ENCODE measurements at regions of chr11 and their contacts with region 1.

Region 1: DNA sequence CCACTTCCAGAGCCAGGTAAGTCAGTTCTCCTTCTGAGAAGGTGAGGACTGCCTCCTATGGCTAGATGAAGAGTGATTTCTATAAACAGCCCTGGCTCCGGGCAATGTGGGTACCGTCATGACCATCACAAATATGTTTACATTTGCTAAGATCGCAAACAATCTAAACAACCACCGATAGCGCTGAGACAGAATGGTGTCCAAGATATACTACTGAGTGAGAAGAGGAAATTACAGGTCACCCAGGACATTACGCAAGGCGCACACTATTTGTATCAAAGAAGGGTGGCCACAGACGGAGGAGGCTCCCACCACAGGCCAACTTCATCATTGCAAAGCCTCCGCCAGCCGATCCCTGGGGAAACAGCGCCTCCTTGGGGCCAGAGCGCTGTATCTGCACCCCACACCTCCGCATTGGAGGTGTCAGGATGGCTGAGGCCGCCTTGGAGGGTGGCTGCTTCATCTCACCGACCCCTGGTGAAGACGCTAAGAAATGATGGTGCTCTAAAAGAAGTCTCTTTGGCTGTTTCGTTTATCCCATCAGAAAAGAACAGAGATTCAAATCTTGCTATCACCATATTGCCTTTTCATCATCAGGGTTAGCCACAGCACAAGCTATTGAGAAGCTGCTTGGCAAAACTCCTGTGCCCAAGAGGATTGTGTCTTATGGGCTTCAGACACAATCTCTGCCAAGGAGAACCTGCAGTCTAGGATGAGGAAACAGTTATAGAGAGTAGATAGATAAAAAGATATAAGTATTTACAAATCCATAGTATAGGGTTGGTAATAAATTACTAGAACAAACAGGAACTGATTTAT is 12.3 kb upstream of the ASRGL1 start:
- DNase-seq: peak; percentile 85
- H3K4me3 Mint-ChIP-seq: no peak overlapping the region
- H3K27ac Mint-ChIP-seq: no peak overlapping the region
- H3K4me1 Mint-ChIP-seq: peaks cover 3% of the 10 kb centered on the region
- H3K27me3 Mint-ChIP-seq: peaks cover 3% of the 10 kb centered on the region

Region 2: DNA sequence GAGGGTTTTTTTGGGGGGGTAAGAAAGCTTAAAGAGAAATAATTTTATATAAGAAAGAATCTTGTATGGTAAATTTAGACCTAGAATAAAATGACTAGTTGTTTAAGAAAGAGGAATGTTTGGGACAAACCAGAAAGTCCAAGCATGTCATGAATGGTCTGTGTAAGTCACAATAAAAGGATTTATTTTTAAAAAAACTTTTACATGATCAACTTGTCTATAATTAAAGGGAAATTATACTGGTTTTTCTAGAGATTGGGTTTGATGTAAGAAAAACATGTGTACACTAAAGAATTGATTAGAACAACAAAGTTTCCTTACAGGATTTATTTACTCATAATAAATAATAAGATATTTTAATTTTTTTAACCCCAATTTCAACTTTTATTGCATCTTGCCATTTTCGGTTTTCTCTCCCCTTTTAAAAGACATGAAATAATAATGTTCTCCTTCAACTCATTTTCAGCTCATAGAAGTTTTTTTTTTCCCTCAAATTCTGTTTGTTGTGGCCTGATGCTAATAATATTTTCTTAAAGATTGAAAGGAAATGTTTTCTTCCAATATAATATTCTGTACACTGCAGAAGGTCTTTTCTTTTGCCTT is 236.5 kb before region 1 on chr11:
- CTCF ChIA-PET with region 1: no interaction called
- POLR2A ChIA-PET with region 1: no interaction called
- intact Hi-C with region 1: no loop called
- DNase-seq: no peak
- H3K4me3 Mint-ChIP-seq: no peak overlapping the region
- H3K27ac Mint-ChIP-seq: no peak overlapping the region
- H3K4me1 Mint-ChIP-seq: no peaks in the 10 kb centered on the region
- H3K27me3 Mint-ChIP-seq: peaks cover 3% of the 10 kb centered on the region

Region 3: GRCh38 chr11:62217191-62217748 is 107.7 kb before region 1 on chr11:
- CTCF ChIA-PET with region 1: interaction called, 14 read pairs
- POLR2A ChIA-PET with region 1: no interaction called
- intact Hi-C with region 1: no loop called
- DNase-seq: no peak
- H3K4me3 Mint-ChIP-seq: no peak overlapping the region
- H3K27ac Mint-ChIP-seq: no peak overlapping the region
- H3K4me1 Mint-ChIP-seq: no peaks in the 10 kb centered on the region
- H3K27me3 Mint-ChIP-seq: peaks cover 6% of the 10 kb centered on the region

Region 4: GRCh38 chr11:62233730-62234129 is 91.2 kb before region 1 on chr11:
- CTCF ChIA-PET with region 1: interaction called, 4 read pairs
- POLR2A ChIA-PET with region 1: no interaction called
- intact Hi-C with region 1: loop called (anchors 5 kb)
- DNase-seq: no peak
- H3K4me3 Mint-ChIP-seq: no peak overlapping the region
- H3K27ac Mint-ChIP-seq: no peak overlapping the region
- H3K4me1 Mint-ChIP-seq: no peaks in the 10 kb centered on the region
- H3K27me3 Mint-ChIP-seq: peaks cover 21% of the 10 kb centered on the region

Region 5: DNA sequence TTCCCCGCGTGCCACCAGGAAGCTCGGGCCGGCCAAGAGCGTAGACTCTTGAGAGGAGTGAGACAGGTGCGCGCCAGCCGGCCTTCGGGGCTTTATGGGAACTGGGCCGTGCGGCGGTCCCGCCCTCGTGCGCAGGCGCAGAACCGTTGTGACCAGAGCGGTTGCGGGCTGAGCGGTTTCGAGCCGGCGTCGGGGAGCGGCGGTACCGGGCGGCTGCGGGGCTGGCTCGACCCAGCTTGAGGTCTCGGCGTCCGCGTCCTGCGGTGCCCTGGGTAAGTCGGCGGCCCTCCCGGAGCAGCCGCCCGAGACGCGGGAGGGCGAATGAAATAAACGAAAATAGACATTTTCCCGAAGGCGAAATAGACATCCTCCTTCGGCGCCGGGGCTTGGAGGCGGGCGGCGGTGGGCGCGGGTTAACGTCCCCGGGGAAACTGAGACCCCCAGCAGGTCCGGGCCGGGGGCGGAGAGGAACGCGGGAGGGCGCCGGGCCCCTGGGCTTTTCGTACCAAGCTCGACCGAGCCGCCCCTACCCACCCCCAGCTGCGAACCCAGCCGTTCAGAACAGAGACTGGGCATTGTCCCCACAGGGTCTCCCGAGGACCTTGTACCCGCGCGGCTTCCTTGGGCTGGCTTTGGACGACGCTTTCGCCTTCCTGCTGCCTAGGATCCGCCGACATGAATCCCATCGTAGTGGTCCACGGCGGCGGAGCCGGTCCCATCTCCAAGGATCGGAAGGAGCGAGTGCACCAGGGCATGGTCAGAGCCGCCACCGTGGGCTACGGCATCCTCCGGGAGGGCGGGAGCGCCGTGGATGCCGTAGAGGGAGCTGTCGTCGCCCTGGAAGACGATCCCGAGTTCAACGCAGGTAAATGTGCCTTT is 12.6 kb after region 1 on chr11 and contains the start of gene ASRGL1:
- CTCF ChIA-PET with region 1: interaction called, 12 read pairs
- POLR2A ChIA-PET with region 1: interaction called, 3 read pairs
- intact Hi-C with region 1: no loop called
- DNase-seq: peak; percentile 81
- H3K4me3 Mint-ChIP-seq: peak within 1 kb of the TSS; percentile 82
- H3K27ac Mint-ChIP-seq: no peak within 1 kb of the TSS
- H3K4me1 Mint-ChIP-seq: peaks cover 8% of the 10 kb centered on the region
- H3K27me3 Mint-ChIP-seq: peaks cover 8% of the 10 kb centered on the region
- total RNA-seq, gene ASRGL1: 7.7 to 8.2 TPM

Region 6: GRCh38 chr11:62461740-62462507 is 137.0 kb after region 1 on chr11:
- CTCF ChIA-PET with region 1: no interaction called
- POLR2A ChIA-PET with region 1: no interaction called
- intact Hi-C with region 1: no loop called
- DNase-seq: no peak
- H3K4me3 Mint-ChIP-seq: no peak overlapping the region
- H3K27ac Mint-ChIP-seq: no peak overlapping the region
- H3K4me1 Mint-ChIP-seq: peaks cover 4% of the 10 kb centered on the region
- H3K27me3 Mint-ChIP-seq: no peaks in the 10 kb centered on the region

Measured in activated CD4-positive, alpha-beta memory T cell treated with anti-CD3 and anti-CD28 coated beads for 36 hours (primary cell).